ENCODE measurements at regions of chr15 and their contacts with region 1.

Region 1: DNA sequence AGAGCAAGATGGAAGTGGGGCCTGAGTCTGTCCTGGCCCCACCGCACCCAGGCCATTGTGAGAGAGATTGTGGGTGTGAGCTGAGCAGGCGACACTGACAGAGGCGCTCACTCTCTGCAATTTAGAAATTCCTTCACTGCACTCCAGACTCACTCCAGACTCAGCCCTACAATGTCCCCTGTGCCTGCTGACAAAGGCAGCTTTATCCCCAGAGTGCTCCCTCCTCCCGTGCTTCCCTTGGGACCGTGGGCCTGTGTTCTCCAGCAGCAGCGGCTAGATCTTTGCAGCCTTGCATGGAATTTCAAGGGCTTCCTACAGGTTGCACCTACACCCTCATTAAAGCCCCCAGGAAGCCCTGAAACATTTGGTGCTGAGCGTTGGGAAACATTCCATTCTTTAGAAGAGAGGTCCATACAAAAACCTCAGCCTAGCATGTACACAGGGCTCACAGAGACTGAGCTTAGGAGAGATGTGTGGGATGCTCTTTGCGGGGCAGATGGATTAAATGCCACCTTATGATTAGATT is 1.3 kb upstream of the IL16 start:
- DNase-seq: no peak
- ATAC-seq: peak in 1 of 4 donors; percentile 25
- H3K4me3 ChIP-seq: no peak overlapping the region
- H3K27ac ChIP-seq: no peak overlapping the region
- H3K4me1 ChIP-seq: peaks cover 0 to 11% (median 0%) of the 10 kb centered on the region in 12 donors
- H3K27me3 ChIP-seq: peaks cover 0 to 5% (median 0%) of the 10 kb centered on the region in 9 donors
- CTCF ChIP-seq: no peak
- POLR2A ChIP-seq: no peak

Region 2: DNA sequence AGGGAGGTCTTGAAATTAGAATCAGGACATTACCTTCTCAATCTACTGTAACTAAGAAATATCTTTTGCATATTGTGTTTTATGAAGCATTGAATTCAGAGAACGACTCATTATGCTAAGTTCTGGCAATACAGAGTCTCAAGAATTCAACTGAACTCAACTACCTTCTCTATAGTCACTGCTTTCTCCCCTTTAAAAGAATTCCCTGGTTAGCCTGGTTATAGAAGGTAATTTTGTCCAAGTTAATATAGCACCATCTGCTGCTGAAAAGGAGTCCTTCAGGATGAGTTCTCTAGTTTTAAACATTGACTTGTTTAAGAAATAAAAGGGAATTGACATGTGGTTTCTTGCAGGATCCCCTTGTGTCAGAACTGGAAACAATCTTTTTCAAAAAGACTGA is 61.5 kb after region 1 on chr15:
- intact Hi-C with region 1: loop called in 1 of 10 experiments (anchors 5 kb)
- DNase-seq: no peak
- ATAC-seq: peak in 2 of 4 donors; percentile 48 to 56
- H3K4me3 ChIP-seq: no peak overlapping the region
- H3K27ac ChIP-seq: no peak overlapping the region
- H3K4me1 ChIP-seq: peaks cover 0 to 12% (median 0%) of the 10 kb centered on the region in 12 donors
- H3K27me3 ChIP-seq: no peaks in the 10 kb centered on the region
- CTCF ChIP-seq: peak in 11 of 12 donors; percentile 7 to 66 (median 49)
- POLR2A ChIP-seq: no peak

Measured in heart left ventricle (tissue), 16 donors.